Activated CD8-positive, alpha-beta T cell treated with anti-CD3 and anti-CD28 coated beads for 36 hours (primary cell): ENCODE measurements at regions of chr19 and their contacts with region 1.

Region 1: GRCh38 chr19:7340959-7341837 is 7.5 kb upstream of the ARHGEF18 start:
- DNase-seq: peak; percentile 91
- ATAC-seq: peak; percentile 31
- H3K4me3 Mint-ChIP-seq: peak overlapping the region; percentile 17
- H3K27ac Mint-ChIP-seq: peak overlapping the region; percentile 66
- H3K4me1 Mint-ChIP-seq: peaks cover 43% of the 10 kb centered on the region
- H3K27me3 Mint-ChIP-seq: no peaks in the 10 kb centered on the region
- CTCF ChIP-seq: peak; percentile 95

Region 2: DNA sequence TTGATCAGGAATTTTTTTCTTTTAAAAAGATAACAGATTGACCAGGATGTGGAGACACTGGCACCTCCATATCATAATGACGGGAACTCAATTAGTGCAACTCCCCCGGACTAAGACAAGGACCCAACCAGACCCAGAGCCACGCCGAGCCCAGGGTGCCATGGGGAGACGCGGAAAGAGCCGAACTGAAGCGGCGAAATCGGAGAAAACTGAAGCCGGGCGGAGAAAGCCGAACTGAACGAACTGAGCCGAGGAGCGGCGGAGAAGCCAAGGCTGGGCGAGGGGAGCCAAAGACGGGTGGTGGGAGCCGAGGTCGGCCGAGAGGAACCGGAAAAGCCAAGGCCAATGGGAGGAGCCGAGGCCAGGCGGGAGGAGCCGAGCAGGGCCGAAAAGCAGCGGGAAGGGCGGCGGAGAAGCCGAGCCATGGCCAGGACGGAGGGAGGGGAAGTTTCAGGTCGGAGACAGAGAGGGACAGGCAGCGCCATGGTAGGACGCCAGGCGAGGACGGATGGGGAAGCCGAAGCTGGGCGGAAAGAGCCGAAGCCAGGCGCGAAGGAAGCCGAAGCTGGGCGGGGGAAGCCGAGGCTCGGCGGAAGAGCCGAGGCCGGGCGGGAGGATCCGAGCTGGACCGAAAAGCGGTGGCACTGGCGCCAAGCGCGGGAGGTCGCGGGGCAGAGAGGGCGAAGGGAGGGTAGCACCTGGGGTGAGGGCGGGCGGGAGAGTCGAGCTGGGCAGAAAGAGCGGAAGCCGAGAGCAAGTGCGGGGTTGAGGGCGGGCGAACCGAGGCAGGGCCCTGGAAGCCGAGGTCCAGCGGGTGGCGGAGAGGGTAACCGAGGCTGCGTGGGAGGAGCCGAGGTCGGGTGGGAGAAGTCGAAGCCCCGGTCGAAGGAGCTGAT is 242.2 kb before region 1 on chr19:
- CTCF ChIA-PET with region 1: interaction called, 57 read pairs
- POLR2A ChIA-PET with region 1: interaction called, 3 read pairs
- intact Hi-C with region 1: loop called (anchors 5 kb)
- DNase-seq: peak; percentile 90
- ATAC-seq: peak; percentile 93
- H3K4me3 Mint-ChIP-seq: peak overlapping the region; percentile 87
- H3K27ac Mint-ChIP-seq: peak overlapping the region; percentile 84
- H3K4me1 Mint-ChIP-seq: peaks cover 16% of the 10 kb centered on the region
- H3K27me3 Mint-ChIP-seq: no peaks in the 10 kb centered on the region
- CTCF ChIP-seq: no peak

Region 3: GRCh38 chr19:7104747-7105447 is 236.3 kb before region 1 on chr19:
- CTCF ChIA-PET with region 1: interaction called, 57 read pairs
- POLR2A ChIA-PET with region 1: interaction called, 3 read pairs
- intact Hi-C with region 1: loop called (anchors 5 kb)
- DNase-seq: no peak
- ATAC-seq: no peak
- H3K4me3 Mint-ChIP-seq: no peak overlapping the region
- H3K27ac Mint-ChIP-seq: no peak overlapping the region
- H3K4me1 Mint-ChIP-seq: peaks cover 9% of the 10 kb centered on the region
- H3K27me3 Mint-ChIP-seq: no peaks in the 10 kb centered on the region
- CTCF ChIP-seq: no peak

Region 4: DNA sequence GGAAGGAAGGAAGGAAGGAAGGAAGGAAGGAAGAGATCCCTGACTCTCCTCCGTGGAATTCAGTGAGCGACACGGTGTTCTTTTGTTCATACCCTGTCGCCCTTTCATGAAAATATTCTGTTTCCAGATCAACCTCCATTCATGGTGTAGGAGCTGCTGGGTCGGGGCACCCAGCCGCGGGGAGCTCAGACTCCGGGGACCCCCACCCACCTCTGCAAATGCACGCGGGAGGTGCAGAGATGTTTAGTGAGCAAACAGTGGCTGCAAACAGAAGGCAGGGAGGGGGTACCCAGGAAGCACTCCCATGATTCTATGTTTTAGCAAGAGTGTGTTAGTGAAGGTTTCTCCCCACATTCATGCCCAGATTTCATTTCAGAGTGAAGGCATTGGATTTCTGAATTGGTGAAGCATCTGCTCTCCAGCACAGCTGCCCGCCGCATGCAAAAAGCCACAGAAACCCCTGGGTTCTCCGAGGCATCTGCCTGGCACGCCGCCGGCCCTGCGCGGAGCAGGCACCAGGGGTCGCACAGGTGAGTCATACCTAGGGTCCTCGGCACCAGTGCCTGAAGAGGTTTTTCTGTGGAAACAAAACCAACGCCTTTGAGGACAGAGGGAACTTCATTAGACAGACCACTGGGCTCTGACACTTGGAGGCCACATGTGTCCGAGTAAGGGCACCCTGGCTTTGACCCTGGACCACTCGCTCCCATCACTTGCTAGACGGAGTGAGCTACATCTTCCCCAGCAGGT is 191.1 kb before region 1 on chr19:
- CTCF ChIA-PET with region 1: interaction called, 19 read pairs
- POLR2A ChIA-PET with region 1: no interaction called
- intact Hi-C with region 1: loop called (anchors 1 kb)
- DNase-seq: no peak
- ATAC-seq: no peak
- H3K4me3 Mint-ChIP-seq: no peak overlapping the region
- H3K27ac Mint-ChIP-seq: no peak overlapping the region
- H3K4me1 Mint-ChIP-seq: peaks cover 3% of the 10 kb centered on the region
- H3K27me3 Mint-ChIP-seq: no peaks in the 10 kb centered on the region
- CTCF ChIP-seq: no peak

Region 5: GRCh38 chr19:7280940-7281666 is 60.1 kb before region 1 on chr19:
- CTCF ChIA-PET with region 1: no interaction called
- POLR2A ChIA-PET with region 1: no interaction called
- intact Hi-C with region 1: no loop called
- DNase-seq: no peak
- ATAC-seq: no peak
- H3K4me3 Mint-ChIP-seq: no peak overlapping the region
- H3K27ac Mint-ChIP-seq: no peak overlapping the region
- H3K4me1 Mint-ChIP-seq: no peaks in the 10 kb centered on the region
- H3K27me3 Mint-ChIP-seq: no peaks in the 10 kb centered on the region
- CTCF ChIP-seq: no peak

Region 6: DNA sequence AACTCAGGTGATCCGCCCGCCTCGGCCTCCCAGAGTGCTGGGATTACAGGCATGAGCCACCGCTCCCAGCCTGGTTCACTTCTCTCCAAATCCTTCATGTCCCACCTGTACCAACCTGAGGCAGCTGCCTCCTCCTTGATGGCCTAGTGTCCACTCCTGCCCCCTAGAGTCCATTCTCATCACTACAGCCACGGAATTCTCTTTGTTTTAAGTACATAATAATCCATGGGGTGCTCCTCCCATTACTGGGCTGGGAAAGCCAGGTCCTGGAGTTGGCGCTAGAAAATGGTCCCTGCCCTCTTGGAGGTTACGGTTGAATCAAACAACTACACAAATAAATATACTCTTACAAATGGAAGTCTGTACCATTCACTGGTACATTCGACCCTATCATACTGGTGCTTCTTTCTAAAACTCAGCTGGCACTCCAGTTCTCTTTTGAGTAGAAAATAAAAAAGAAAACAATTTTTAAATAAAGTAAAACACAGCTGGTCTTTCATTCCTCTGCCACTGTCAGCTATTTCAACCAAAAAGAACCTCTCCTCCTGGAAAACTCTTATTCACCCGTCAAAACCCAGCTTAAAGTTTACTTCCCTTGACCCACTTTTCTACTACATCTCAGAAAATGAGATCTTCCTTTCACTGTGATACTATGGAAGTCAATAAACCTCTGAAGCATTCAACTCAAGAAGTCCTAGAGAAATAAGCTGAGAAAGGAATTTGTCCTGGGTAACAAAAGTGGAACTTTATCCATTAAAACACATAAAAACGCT is 14.9 kb before region 1 on chr19:
- CTCF ChIA-PET with region 1: interaction called, 17 read pairs
- POLR2A ChIA-PET with region 1: no interaction called
- intact Hi-C with region 1: no loop called
- DNase-seq: peak; percentile 75
- ATAC-seq: no peak
- H3K4me3 Mint-ChIP-seq: no peak overlapping the region
- H3K27ac Mint-ChIP-seq: no peak overlapping the region
- H3K4me1 Mint-ChIP-seq: no peaks in the 10 kb centered on the region
- H3K27me3 Mint-ChIP-seq: no peaks in the 10 kb centered on the region
- CTCF ChIP-seq: peak; percentile 57

Region 7: DNA sequence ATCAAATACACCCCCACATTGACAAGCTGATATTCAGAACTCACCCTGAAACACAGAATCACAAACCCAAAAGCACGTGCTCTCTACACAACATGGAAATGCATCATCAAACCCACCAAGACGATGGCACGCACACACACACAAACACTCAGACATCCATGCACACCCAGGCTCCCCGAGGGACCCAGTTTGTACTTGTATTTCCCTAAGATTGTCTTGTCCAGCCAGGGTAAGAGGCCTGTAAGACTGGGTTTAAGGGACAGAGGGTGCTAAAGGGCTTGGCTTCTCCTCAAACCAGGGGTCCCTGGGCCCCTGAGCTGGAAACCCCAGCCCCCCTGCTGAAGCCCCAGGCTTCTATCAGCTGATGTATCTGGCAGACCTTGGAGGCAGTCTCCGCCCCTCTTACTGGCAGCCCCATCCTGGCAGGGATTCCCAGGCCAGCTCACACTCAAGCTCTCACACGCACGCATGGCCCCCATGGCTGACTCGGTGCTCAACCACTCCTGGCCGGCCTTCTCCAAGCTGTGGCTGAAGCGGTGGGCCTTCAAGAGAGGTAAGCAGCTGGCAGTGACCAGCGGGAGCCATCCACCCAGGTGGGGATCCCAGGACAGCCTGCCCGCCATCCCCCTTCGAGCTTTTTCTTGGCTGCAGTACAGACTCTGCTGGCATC is 14.1 kb after region 1 on chr19:
- CTCF ChIA-PET with region 1: interaction called, 16 read pairs
- POLR2A ChIA-PET with region 1: no interaction called
- intact Hi-C with region 1: no loop called
- DNase-seq: no peak
- ATAC-seq: no peak
- H3K4me3 Mint-ChIP-seq: no peak overlapping the region
- H3K27ac Mint-ChIP-seq: peak overlapping the region; percentile 76
- H3K4me1 Mint-ChIP-seq: peaks cover 56% of the 10 kb centered on the region
- H3K27me3 Mint-ChIP-seq: no peaks in the 10 kb centered on the region
- CTCF ChIP-seq: no peak

Region 8: GRCh38 chr19:7360393-7360984 is 19.3 kb after region 1 on chr19:
- CTCF ChIA-PET with region 1: interaction called, 16 read pairs
- POLR2A ChIA-PET with region 1: no interaction called
- intact Hi-C with region 1: no loop called
- DNase-seq: no peak
- ATAC-seq: peak; percentile 34
- H3K4me3 Mint-ChIP-seq: no peak overlapping the region
- H3K27ac Mint-ChIP-seq: peak overlapping the region; percentile 41
- H3K4me1 Mint-ChIP-seq: peaks cover 54% of the 10 kb centered on the region
- H3K27me3 Mint-ChIP-seq: no peaks in the 10 kb centered on the region
- CTCF ChIP-seq: no peak